ENCODE measurements at regions of chr10 and their contacts with region 1.

Region 1: GRCh38 chr10:95290461-95291364 is at the start of gene PDLIM1:
- DNase-seq: no peak
- ATAC-seq: peak; percentile 91
- H3K4me3 ChIP-seq: peak within 1 kb of the TSS; percentile 78 to 83
- H3K27ac ChIP-seq: peak within 1 kb of the TSS; percentile 88
- H3K4me1 ChIP-seq: peaks cover 70% of the 10 kb centered on the region
- H3K27me3 ChIP-seq: no peaks in the 10 kb centered on the region
- CTCF ChIP-seq: no peak
- total RNA-seq, gene PDLIM1: 183 TPM

Region 2: DNA sequence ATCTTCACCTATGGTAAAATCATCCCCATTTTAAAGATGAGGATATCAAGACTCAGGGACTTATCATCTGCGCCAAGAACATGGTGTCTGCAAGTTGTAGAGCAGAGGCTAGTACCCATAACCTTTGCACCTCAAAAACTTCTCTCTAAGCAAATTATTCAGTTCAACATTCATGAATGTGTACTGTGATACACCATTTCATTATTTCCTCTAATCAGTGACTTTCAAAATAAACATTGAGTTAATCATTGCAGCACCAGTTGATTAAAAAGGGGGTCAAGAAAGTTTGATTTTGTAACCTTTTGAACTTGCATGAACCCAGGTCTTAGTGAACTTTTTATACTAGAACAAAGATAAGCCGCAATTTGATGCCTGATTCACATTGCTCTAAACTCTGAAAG is 173.8 kb before region 1 on chr10:
- CTCF ChIA-PET with region 1: no interaction called
- POLR2A ChIA-PET with region 1: no interaction called
- in situ Hi-C with region 1: no loop called
- intact Hi-C with region 1: no loop called
- DNase-seq: no peak
- ATAC-seq: no peak
- H3K4me3 ChIP-seq: no peak overlapping the region
- H3K27ac ChIP-seq: no peak overlapping the region
- H3K4me1 ChIP-seq: no peaks in the 10 kb centered on the region
- H3K27me3 ChIP-seq: no peaks in the 10 kb centered on the region
- CTCF ChIP-seq: no peak

Region 3: GRCh38 chr10:95276367-95277200 is 14.1 kb before region 1 on chr10:
- CTCF ChIA-PET with region 1: no interaction called
- POLR2A ChIA-PET with region 1: interaction called, 14 read pairs
- in situ Hi-C with region 1: no loop called
- intact Hi-C with region 1: no loop called
- DNase-seq: no peak
- ATAC-seq: no peak
- H3K4me3 ChIP-seq: no peak overlapping the region
- H3K27ac ChIP-seq: no peak overlapping the region
- H3K4me1 ChIP-seq: peaks cover 63% of the 10 kb centered on the region
- H3K27me3 ChIP-seq: no peaks in the 10 kb centered on the region
- CTCF ChIP-seq: no peak

Region 4: DNA sequence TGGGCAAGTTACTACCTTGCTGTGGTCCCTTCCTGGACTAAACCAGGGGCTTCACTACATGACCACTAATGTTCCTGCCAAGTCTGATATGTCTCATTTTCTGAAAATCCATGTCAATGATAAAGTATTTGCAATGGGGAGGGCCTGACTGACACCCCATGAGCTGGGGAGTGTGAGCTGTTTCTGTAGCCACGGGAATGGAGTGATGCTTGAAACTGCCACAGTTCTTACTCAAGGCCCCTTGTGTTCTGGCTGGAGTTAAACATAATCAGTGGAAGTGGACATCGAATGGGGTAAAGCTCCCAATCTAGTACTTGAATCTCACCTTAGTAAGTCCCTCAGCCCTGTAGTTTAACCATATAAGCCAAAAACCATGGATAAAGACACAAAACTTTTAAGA is 62.0 kb after region 1 on chr10:
- CTCF ChIA-PET with region 1: no interaction called
- POLR2A ChIA-PET with region 1: no interaction called
- in situ Hi-C with region 1: no loop called
- intact Hi-C with region 1: no loop called
- DNase-seq: no peak
- ATAC-seq: no peak
- H3K4me3 ChIP-seq: no peak overlapping the region
- H3K27ac ChIP-seq: no peak overlapping the region
- H3K4me1 ChIP-seq: no peaks in the 10 kb centered on the region
- H3K27me3 ChIP-seq: no peaks in the 10 kb centered on the region
- CTCF ChIP-seq: no peak

Region 5: DNA sequence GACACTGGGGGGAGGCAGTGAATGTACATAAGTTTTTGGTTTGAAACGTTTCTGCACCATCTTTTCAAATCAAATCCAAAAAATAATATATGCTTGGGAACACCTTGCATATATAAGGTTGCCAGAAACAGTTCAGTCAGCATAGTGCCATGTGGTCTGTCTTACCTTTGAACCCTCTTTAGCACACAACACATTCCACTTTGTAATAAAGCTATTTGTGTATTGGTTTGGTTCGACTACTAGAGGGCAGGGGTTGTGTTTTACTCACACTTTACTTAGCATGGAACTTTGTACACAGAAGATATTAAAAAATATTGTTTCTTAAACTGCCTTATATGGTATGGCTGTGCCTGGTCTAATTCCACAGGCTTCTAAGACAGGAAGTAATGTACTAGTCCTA is 322.6 kb after region 1 on chr10:
- CTCF ChIA-PET with region 1: interaction called, 5 read pairs
- POLR2A ChIA-PET with region 1: interaction called, 11 read pairs
- in situ Hi-C with region 1: no loop called
- intact Hi-C with region 1: no loop called
- DNase-seq: no peak
- ATAC-seq: no peak
- H3K4me3 ChIP-seq: no peak overlapping the region
- H3K27ac ChIP-seq: no peak overlapping the region
- H3K4me1 ChIP-seq: no peaks in the 10 kb centered on the region
- H3K27me3 ChIP-seq: no peaks in the 10 kb centered on the region
- CTCF ChIP-seq: no peak

Region 6: GRCh38 chr10:95880704-95881103 is 590.0 kb after region 1 on chr10:
- CTCF ChIA-PET with region 1: no interaction called
- POLR2A ChIA-PET with region 1: no interaction called
- in situ Hi-C with region 1: no loop called
- intact Hi-C with region 1: no loop called
- DNase-seq: no peak
- ATAC-seq: no peak
- H3K4me3 ChIP-seq: no peak overlapping the region
- H3K27ac ChIP-seq: no peak overlapping the region
- H3K4me1 ChIP-seq: no peaks in the 10 kb centered on the region
- H3K27me3 ChIP-seq: no peaks in the 10 kb centered on the region
- CTCF ChIP-seq: no peak

Measured in Panc1 (cell line).